Activated T-helper 1 cell treated with anti-CD3 and anti-CD28 coated beads, Interleukin-12 subunit alpha, Interleukin-12 subunit beta, Interleukin-2, Interleukin-4 antibody, amounts not matched to agents 30 ng/mL and 10 ng/mL and 1 ng/mL, durations not matched to agents 14 hours and 24 hours and 36 hours (primary cell): ENCODE measurements at regions of chr18 and their contacts with region 1.

Region 1: DNA sequence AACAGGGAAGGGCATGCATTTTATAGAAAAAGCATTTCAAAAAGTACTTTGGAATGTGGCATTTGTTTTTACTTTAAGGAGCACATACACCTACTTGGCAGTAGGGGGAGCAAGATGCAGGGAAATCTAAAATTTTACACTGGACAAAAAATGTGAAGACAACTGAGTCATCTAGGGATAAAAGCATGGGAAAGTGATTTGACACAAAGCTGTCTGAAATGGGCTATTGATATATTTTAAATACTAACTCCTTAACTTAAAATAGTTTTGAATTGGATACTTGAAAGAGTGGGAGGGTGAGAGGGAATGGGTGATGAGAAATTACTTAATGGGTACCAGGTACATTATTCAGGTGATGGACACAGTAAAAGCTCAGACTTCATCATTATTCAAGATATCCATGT is 15.8 kb downstream of the TMEM200C start:
- DNase-seq: no peak
- H3K4me3 Mint-ChIP-seq: no peak overlapping the region
- H3K27ac Mint-ChIP-seq: no peak overlapping the region
- H3K4me1 Mint-ChIP-seq: no peaks in the 10 kb centered on the region
- H3K27me3 Mint-ChIP-seq: peaks cover 5% of the 10 kb centered on the region

Region 2: GRCh38 chr18:6401687-6402086 is 522.2 kb after region 1 on chr18:
- intact Hi-C with region 1: loop called (anchors 10 kb)
- DNase-seq: no peak
- H3K4me3 Mint-ChIP-seq: no peak overlapping the region
- H3K27ac Mint-ChIP-seq: no peak overlapping the region
- H3K4me1 Mint-ChIP-seq: no peaks in the 10 kb centered on the region
- H3K27me3 Mint-ChIP-seq: no peaks in the 10 kb centered on the region

Region 3: GRCh38 chr18:6521795-6522418 is 642.4 kb after region 1 on chr18:
- intact Hi-C with region 1: loop called (anchors 1 kb)
- DNase-seq: peak; percentile 3
- H3K4me3 Mint-ChIP-seq: no peak overlapping the region
- H3K27ac Mint-ChIP-seq: no peak overlapping the region
- H3K4me1 Mint-ChIP-seq: no peaks in the 10 kb centered on the region
- H3K27me3 Mint-ChIP-seq: no peaks in the 10 kb centered on the region

Region 4: DNA sequence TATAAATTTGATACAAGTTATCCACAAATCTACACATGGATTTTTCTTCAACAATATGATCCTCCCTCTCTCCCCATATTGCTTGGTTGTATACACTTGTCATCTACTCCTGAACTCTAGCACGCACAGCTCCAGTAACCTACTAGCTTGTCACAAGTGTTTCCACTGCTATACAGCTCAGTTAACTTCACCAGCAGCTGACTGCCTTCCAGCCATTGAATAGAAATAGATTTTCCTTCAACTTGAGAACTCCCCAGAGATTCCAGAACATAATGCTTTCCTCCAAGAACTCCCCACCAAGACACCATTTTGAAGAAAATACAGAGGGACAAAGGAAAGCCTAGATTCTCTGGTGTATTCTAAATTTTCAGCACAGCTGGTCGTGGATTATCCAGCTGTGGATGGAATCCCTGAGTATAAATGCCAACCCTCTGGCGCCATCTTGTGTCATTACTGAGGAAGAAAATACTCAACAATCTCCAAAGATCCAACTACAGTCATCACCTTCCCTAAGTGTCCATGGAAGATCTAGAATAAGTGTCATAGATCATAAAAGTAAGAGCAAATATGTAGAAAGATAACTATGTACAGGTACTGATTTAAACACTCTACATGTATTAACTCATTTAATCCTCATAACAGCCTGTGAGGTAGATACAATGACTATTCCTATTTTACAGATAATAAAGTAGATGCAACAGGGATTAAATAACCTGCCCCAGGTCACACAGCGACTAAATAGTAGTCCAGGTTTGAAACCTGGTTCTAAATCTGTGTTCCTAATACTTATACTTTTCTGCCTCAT is 1006.7 kb after region 1 on chr18:
- intact Hi-C with region 1: loop called (anchors 5 kb)
- DNase-seq: no peak
- H3K4me3 Mint-ChIP-seq: no peak overlapping the region
- H3K27ac Mint-ChIP-seq: no peak overlapping the region
- H3K4me1 Mint-ChIP-seq: no peaks in the 10 kb centered on the region
- H3K27me3 Mint-ChIP-seq: no peaks in the 10 kb centered on the region